ENCODE measurements at regions of chr17 and their contacts with region 1.

Region 1: DNA sequence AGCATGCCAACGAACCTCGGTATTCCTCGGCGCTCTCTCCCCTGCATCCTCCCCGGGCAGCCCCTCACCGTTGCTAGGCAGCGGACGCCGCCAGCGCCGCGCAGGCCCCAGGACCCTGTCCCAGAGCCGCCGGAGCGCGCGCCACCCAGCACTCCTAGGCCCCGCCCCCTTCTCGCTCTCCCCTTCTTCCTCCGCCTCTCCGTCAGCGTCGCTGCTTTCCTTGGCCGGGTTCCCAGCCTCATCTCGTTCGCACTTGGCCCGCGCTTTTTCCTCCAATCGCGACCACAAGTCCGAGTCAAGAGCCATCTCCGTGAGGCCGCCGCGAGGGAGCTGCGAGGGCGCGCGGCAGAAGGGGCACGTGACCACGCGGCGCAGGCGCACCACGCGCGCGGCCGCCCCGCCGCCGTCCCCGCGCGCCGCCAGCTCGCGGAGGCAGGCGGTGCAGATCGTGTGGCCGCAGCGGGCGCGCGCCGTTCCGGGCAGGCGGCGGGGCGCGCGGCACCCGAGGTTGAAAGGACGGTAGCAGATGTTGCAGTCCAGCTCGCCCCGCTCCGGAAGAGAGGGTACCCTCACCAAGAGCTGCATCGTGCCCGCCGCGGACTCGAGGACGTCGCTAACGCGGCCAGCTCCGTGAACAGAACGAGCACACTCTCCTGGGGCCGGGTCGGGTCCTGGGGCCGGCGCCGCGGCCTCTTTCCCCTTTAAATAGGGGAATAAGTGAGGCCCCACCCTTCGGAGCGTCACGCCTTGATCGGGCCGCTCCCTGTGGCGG is at the start of gene RNF227:
- DNase-seq: peak; percentile 81
- H3K4me3 ChIP-seq: peak within 1 kb of the TSS; percentile 70
- CTCF ChIP-seq: no peak

Region 2: DNA sequence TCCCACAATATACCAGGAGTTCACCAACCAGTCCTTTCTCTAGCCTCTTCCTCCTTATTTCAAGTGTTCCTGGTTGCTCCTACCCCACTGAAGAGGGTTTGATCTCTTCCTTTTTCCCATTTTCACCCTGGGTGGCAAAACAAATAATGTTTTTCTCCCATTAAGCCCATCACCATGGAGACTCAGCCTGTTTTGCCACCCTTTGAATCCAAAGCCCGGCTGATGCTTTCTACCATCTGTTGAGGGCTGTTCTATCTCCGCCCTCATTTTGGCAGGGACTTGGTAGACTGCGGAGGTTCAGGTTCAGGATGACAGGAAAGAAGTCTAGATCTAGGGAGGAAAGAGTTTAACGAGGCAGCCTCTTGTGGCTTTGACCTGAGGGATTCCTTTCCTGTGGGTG is 195.7 kb before region 1 on chr17:
- CTCF ChIA-PET with region 1: no interaction called
- POLR2A ChIA-PET with region 1: no interaction called
- DNase-seq: no peak
- H3K4me3 ChIP-seq: no peak overlapping the region
- CTCF ChIP-seq: no peak

Region 3: GRCh38 chr17:7897773-7898172 is 18.0 kb before region 1 on chr17:
- CTCF ChIA-PET with region 1: interaction called, 22 read pairs
- POLR2A ChIA-PET with region 1: interaction called, 3 read pairs
- DNase-seq: no peak
- H3K4me3 ChIP-seq: no peak overlapping the region
- CTCF ChIP-seq: peak; percentile 44

Region 4: GRCh38 chr17:7903154-7904103 is 12.4 kb before region 1 on chr17:
- CTCF ChIA-PET with region 1: interaction called, 22 read pairs
- POLR2A ChIA-PET with region 1: interaction called, 3 read pairs
- DNase-seq: no peak
- H3K4me3 ChIP-seq: no peak overlapping the region
- CTCF ChIP-seq: no peak

Region 5: GRCh38 chr17:7931709-7932482 is 16.1 kb after region 1 on chr17 and contains the starts of genes CNTROB and TRAPPC1:
- CTCF ChIA-PET with region 1: interaction called, 21 read pairs
- POLR2A ChIA-PET with region 1: interaction called, 23 read pairs
- DNase-seq: peak; percentile 92
- H3K4me3 ChIP-seq: peak within 1 kb of the TSS; percentile 100
- CTCF ChIP-seq: no peak

Region 6: DNA sequence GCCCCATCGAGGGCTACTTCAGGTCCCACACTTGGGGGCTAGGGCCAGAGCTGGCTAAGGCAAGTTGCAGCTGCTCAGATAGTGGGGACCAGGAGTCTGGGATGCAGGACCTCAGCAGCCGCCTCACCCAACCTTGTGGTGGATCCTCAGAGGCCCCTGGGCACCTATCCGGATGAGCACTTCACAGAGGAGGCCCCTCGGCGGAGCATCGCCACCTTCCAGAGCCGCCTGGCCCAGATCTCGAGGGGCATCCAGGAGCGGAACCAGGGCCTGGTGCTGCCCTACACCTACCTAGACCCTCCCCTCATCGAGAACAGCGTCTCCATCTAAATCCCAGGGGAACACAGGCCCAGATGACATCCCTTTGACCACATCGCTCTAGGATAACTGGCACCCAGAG is 132.4 kb after region 1 on chr17:
- CTCF ChIA-PET with region 1: interaction called, 40 read pairs
- POLR2A ChIA-PET with region 1: no interaction called
- DNase-seq: no peak
- H3K4me3 ChIP-seq: no peak overlapping the region
- CTCF ChIP-seq: no peak

Measured in AG04449 (cell line).